A549 (cell line): ENCODE measurements at regions of chr5 and their contacts with region 1.

Region 1: GRCh38 chr5:138565100-138565821 is 9.9 kb downstream of the HSPA9 start:
- DNase-seq: no peak
- ATAC-seq: no peak
- H3K4me3 ChIP-seq: no peak overlapping the region
- H3K27ac ChIP-seq: no peak overlapping the region
- H3K4me1 ChIP-seq: peaks cover 31% of the 10 kb centered on the region; the same call in 2 of the 3 replicates
- CTCF ChIP-seq: no peak
- EP300 ChIP-seq: no peak
- POLR2A ChIP-seq: no peak
- RAD21 ChIP-seq: no peak

Region 2: GRCh38 chr5:138449501-138450239 is 115.6 kb before region 1 on chr5:
- CTCF ChIA-PET with region 1: no interaction called
- POLR2A ChIA-PET with region 1: no interaction called
- DNase-seq: peak; percentile 81 to 96
- ATAC-seq: peak; percentile 86 to 96
- H3K4me3 ChIP-seq: no peak overlapping the region
- H3K27ac ChIP-seq: peak overlapping the region; percentile 19 to 69; a peak in 4 of 6 replicates
- H3K4me1 ChIP-seq: peaks cover 9% of the 10 kb centered on the region; the same call in 1 of the 3 replicates
- CTCF ChIP-seq: peak; percentile 86
- EP300 ChIP-seq: no peak
- POLR2A ChIP-seq: no peak
- RAD21 ChIP-seq: peak; percentile 81 to 85

Region 3: DNA sequence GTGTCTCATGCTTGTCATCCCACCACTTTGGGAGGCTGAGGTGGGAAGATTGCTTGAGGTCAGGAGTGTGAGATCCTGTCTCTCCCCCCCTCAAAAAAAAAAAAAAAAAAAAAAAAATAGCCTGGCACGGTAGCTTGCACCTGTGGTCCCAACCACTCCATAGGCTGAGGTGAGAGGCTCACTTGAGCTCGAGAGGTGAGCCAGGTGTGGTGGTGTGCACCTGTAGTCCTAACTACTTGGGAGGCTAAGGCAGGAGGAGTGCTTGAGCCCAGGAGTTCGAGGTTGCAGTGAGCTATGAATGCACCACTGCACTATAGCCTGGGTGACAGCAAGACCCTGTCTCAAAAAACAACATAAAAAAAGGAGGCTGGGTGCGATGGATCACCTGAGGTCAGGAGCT is 12.6 kb before region 1 on chr5:
- CTCF ChIA-PET with region 1: interaction called, 7 read pairs
- POLR2A ChIA-PET with region 1: interaction called, 13 read pairs
- DNase-seq: no peak
- ATAC-seq: no peak
- H3K4me3 ChIP-seq: no peak overlapping the region
- H3K27ac ChIP-seq: no peak overlapping the region
- H3K4me1 ChIP-seq: no peaks in the 10 kb centered on the region
- CTCF ChIP-seq: no peak
- EP300 ChIP-seq: no peak
- POLR2A ChIP-seq: no peak
- RAD21 ChIP-seq: no peak